ENCODE measurements at regions of chr9 and their contacts with region 1.

Region 1: DNA sequence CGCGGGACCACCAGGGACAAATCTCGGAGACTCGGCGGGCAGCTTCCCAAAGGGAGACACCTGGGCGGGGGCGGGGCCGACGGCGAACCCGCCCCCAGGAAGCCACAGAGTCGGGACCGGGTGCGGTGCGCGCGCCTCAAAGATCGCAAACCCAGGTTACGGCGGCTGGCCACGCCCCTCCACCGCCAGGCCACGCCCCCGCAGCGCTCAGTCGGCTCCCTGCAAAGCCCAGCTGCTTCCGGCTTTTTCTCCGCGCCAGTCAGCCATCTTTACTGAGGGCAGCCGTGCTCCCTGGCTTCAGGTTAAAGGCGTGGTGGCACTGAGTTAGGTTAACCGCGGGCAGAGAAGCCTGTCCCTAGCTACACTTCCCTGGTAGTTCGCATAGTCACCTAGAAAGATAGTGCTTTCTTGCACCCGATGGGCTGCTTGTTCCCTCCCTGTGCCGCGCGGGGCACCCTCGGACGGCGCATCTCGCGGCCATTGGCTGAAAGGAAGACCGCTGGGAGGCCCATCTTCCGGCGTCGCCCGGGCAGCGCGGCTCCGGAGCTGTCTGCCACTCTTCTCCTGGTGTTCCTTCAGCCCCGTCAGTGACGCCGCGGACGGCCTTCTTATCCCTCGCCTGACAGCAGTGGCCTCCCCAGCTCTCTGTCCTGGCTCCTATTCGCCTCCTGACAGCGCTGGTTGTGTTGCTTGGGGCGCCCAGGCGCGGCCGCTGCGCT is at the start of gene TBC1D2:
- DNase-seq: peak; percentile 99
- H3K4me3 Mint-ChIP-seq: peak within 1 kb of the TSS; percentile 84
- H3K27ac Mint-ChIP-seq: peak within 1 kb of the TSS; percentile 98
- H3K4me1 Mint-ChIP-seq: peaks cover 21% of the 10 kb centered on the region
- H3K27me3 Mint-ChIP-seq: no peaks in the 10 kb centered on the region
- total RNA-seq, gene TBC1D2: 1.6 and 1.8 TPM in 2 replicates

Region 2: DNA sequence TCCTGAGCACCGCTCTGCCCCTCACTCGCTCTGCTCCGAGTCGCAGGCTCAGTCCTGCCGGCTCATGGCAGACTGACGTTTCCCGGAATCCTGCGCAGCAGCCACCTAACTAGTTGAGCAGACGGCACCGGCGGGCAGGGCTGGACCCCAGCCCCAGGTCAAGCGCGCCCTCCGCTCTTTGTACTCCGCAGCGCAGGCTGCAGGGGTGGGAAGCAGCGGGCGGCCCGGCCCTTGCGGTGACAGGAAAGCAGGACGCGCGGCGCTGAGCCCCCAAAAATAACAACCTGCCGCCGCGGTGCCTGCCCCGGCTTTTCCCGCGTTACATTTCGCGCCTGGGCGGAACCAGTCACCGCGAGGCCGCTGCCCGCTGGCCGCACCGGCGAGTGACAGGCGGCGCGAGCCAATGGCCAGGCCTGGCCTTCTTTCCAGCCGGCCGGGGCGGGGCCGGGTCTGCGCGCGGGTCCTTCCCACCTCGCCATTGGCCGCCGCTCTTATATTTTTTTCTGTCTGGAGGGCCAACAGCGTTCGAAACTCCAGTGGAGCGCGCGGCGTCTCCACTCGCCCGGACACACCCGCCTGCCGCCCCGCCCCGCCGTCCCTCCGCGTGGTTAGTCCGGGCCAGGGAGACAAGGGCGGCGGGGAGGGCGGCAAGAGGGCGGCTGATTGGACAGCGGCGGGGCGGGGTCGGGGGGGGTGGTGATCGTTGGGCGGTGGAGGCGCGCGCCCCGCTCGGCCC is 1837.5 kb before region 1 on chr9 and contains the start of gene ZNF367:
- intact Hi-C with region 1: loop called (anchors 5 kb)
- DNase-seq: peak; percentile 98
- H3K4me3 Mint-ChIP-seq: peak within 1 kb of the TSS; percentile 97
- H3K27ac Mint-ChIP-seq: peak within 1 kb of the TSS; percentile 95
- H3K4me1 Mint-ChIP-seq: peaks cover 38% of the 10 kb centered on the region
- H3K27me3 Mint-ChIP-seq: no peaks in the 10 kb centered on the region
- total RNA-seq, gene ZNF367: 21.7 and 22.1 TPM in 2 replicates

Region 3: DNA sequence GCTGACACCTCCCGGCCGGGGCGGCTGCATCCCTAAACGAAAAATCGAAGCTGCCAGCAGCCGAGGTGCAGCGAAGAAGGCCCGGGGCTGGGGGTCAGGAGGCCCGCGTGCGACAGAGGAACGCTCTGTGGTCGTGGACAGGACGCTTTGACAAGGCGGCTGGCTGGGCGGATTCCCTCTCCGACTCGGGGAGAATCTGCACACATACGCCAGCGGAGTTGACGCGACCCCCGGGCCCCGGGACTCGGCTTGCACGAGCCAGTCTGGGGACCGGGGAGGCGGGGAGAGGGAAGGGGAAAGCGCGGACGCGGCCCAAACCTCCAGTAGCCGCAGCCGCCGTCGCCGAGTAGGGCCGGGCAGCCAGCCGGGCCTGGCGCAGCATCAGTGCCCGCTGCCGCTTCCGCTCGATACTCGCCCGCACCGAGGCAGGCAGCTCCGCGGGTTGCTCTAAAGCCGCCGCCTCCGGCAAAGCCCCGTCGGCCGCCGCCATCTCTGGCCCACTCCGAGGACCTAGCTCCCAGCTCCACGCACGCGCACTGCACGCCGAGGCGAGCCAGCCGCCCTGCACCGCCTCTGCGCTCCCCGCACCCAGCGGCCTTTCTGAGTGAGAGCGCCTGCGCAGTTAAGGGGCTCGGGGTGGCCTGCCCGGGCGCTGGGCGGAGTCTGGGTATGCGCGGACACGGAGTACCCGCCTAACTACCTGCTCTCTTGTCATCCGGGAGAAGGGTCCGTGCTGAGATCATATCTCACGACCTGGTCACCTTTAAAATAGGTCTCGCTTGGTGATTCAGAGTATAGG is 558.7 kb before region 1 on chr9 and contains the start of gene XPA:
- intact Hi-C with region 1: loop called (anchors 5 kb)
- DNase-seq: peak; percentile 99
- H3K4me3 Mint-ChIP-seq: peak within 1 kb of the TSS; percentile 91
- H3K27ac Mint-ChIP-seq: peak within 1 kb of the TSS; percentile 89
- H3K4me1 Mint-ChIP-seq: peaks cover 47% of the 10 kb centered on the region
- H3K27me3 Mint-ChIP-seq: no peaks in the 10 kb centered on the region
- total RNA-seq, gene XPA: 8.9 and 12.0 TPM in 2 replicates

Region 4: GRCh38 chr9:98056269-98057137 is 199.2 kb before region 1 on chr9 and contains the start of gene NANS:
- intact Hi-C with region 1: loop called (anchors 2 kb)
- DNase-seq: peak; percentile 98
- H3K4me3 Mint-ChIP-seq: peak within 1 kb of the TSS; percentile 93
- H3K27ac Mint-ChIP-seq: peak within 1 kb of the TSS; percentile 97
- H3K4me1 Mint-ChIP-seq: peaks cover 33% of the 10 kb centered on the region
- H3K27me3 Mint-ChIP-seq: no peaks in the 10 kb centered on the region
- total RNA-seq, gene NANS: 54.0 and 57.1 TPM in 2 replicates

Region 5: DNA sequence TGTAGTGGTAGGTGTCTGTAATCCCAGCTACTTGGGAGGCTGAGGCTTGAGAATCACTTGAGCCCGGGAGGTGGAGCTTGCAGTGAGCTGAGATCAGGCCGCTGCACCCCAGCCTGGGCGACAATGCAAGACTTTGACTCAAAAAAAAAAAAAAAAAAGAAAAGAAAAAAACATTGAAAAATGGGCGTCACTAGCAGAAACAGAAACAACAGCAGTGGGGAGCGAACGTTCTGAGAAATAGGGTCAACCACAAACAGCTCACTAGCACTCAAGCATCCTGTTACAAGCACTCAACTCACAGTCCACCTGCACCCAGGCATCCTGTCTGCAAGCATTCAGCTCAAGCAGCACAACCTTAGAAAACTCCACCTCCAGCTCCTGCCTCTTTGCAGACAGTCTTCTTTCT is 153.9 kb before region 1 on chr9:
- intact Hi-C with region 1: loop called (anchors 1 kb)
- DNase-seq: peak; percentile 95
- H3K4me3 Mint-ChIP-seq: peak overlapping the region; percentile 80
- H3K27ac Mint-ChIP-seq: peak overlapping the region; percentile 93
- H3K4me1 Mint-ChIP-seq: peaks cover 73% of the 10 kb centered on the region
- H3K27me3 Mint-ChIP-seq: no peaks in the 10 kb centered on the region

Region 6: DNA sequence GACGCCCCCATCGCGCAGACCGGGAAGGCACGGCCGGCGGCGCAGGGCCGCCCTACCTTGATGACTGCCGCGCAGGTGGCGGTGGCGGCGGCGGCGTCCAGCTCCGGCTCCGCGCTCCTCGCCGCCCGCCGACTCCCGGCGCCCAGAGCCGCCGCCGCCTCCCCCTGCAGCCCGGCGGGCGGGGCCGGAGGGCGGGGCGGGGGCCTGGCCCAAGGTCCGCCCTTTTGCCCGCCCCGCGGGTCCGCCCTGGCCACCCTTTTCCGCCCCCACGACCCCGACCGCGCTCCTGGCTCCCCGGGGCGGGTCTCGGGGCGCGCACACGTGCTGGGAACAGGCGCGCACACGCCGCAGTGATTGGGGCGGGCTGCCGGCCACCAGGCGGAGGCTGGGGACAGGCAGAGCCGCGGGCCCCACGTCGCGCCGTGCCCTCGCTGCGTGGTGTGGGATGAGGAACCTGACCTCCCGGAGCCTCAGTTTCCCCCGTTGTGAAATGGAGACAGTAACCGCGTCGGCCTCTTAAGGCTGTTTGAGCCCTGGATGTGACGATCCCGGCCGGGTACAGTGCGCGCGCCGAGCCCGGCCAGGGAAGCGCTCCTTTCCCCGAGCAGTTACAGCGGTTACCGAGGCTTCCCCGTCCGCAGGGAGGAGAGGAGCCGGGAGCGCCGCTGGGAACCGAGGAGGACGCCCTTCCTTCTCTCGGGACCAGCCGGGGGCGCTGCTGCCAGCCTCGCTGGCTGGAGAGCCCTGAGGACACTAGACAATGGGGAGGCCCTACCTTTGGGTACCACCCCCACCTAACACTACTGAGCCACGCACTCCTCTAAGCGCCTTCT is 63.0 kb before region 1 on chr9 and contains the start of gene CORO2A:
- intact Hi-C with region 1: loop called (anchors 2 kb)
- DNase-seq: peak; percentile 93
- H3K4me3 Mint-ChIP-seq: peak within 1 kb of the TSS; percentile 83
- H3K27ac Mint-ChIP-seq: peak within 1 kb of the TSS; percentile 65
- H3K4me1 Mint-ChIP-seq: peaks cover 10% of the 10 kb centered on the region
- H3K27me3 Mint-ChIP-seq: peaks cover 7% of the 10 kb centered on the region
- total RNA-seq, gene CORO2A: 0.92 and 1.4 TPM in 2 replicates

Measured in activated CD4-positive, alpha-beta T cell treated with anti-CD3 and anti-CD28 coated beads, Interleukin-2, amount 10 ng/mL, durations not matched to agents 24 days and 14 days (primary cell).